Activated CD4-positive, alpha-beta T cell treated with anti-CD3 and anti-CD28 coated beads for 36 hours (primary cell): ENCODE measurements at regions of chr15 and their contacts with region 1.

Region 1: DNA sequence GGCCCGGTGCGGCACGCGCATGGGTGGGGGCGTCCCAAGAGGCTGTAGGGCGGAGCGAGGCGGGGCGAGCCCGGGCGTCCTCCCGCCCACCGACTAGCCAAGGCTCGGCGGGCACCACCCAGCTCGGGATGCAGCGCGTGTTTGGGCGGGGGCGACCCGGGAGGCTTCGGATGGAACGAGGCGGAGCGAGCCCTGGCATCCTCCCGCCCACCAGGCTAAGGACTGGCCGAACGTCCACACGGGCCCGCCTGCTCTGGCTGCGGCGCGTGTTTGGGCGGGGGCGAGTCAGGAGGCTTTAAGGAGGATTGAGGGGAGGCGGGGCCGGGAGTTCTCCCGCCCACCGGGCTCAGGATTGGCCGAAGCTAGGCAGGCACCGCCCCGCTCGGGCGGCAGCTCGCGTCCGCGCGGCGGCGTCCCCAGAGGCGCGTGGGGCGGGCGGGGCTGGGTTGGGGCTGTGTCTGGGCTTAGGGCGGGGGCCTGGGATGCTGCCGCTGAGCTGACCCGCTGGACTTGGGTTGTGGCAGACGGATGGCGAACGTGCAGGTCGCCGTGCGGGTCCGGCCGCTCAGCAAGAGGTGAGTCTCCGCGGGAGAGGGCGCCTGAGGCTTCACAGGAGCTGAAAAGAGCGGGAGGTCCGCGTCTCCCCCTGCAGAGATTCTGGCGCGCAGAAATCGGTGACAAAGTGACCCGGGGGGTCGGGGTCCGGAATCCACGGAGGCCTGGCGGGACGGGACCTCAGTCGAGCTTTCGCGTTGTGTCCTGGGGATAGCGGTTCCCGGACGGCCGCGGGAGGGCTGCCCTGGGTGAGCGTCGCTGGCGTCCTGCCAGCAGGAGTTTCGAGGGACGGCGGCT is at the start of gene STARD9:
- DNase-seq: peak; percentile 97
- ATAC-seq: peak; percentile 92
- H3K4me3 Mint-ChIP-seq: peak within 1 kb of the TSS; percentile 86
- H3K27ac Mint-ChIP-seq: peak within 1 kb of the TSS; percentile 76
- H3K4me1 Mint-ChIP-seq: peaks cover 18% of the 10 kb centered on the region
- H3K27me3 Mint-ChIP-seq: peaks cover 21% of the 10 kb centered on the region
- total RNA-seq, gene STARD9: 4.0 to 4.1 TPM

Region 2: GRCh38 chr15:41972253-41973242 is 602.9 kb before region 1 on chr15 and contains the start of gene EHD4:
- CTCF ChIA-PET with region 1: no interaction called
- POLR2A ChIA-PET with region 1: no interaction called
- intact Hi-C with region 1: loop called in 1 of 2 experiments (anchors 1 kb)
- DNase-seq: peak; percentile 98
- ATAC-seq: peak; percentile 80
- H3K4me3 Mint-ChIP-seq: peak within 1 kb of the TSS; percentile 86
- H3K27ac Mint-ChIP-seq: peak within 1 kb of the TSS; percentile 94
- H3K4me1 Mint-ChIP-seq: peaks cover 53% of the 10 kb centered on the region
- H3K27me3 Mint-ChIP-seq: peaks cover 8% of the 10 kb centered on the region
- total RNA-seq, gene EHD4: 34.7 to 35.7 TPM

Region 3: DNA sequence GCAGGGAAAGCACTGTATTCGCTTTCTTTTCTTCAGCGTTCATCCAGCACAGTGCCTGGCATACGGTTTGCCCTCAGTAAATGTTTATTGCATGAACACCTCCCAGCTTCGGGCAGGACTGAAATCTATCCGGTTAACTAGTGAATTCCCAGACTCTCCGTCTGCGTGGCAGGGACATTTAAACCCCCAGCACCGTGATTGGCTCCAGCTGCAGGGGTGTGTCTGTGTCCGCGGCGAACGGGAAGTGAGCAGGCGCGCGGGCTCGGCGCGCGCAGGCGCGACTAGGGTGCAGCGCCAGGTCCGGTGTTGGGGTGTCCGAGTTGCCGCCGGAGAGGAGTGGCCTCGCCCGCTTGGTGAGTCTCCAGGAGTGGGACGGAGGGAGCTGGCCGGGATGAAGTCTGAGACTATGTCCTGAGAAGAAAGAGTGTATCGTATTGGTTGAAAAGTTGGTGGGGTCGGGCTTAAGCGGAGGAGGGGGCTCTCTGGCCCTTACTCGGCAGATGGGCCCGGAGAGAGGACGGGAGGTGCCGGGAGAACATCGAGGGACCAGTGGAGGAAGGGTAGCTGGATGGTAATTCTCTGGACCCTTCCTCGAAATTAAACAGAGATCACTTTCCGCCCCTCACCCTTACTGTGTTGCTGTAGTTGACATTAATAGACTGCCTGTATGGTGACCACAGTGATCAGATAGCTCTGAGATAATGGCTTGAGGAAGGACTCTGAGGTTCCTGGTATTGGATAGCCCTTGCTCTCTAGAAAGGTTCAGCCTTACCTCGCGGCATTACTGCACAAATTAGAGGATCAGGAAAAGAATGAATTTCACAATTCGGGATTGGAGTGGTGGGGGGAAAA is 79.8 kb before region 1 on chr15 and contains the start of gene SNAP23:
- CTCF ChIA-PET with region 1: no interaction called
- POLR2A ChIA-PET with region 1: interaction called, 6 read pairs
- intact Hi-C with region 1: loop called in 1 of 2 experiments (anchors 1 kb)
- DNase-seq: peak; percentile 89
- ATAC-seq: peak; percentile 95
- H3K4me3 Mint-ChIP-seq: peak within 1 kb of the TSS; percentile 96
- H3K27ac Mint-ChIP-seq: peak within 1 kb of the TSS; percentile 97
- H3K4me1 Mint-ChIP-seq: peaks cover 68% of the 10 kb centered on the region
- H3K27me3 Mint-ChIP-seq: no peaks in the 10 kb centered on the region
- total RNA-seq, gene SNAP23: 45.5 to 77.5 TPM

Region 4: DNA sequence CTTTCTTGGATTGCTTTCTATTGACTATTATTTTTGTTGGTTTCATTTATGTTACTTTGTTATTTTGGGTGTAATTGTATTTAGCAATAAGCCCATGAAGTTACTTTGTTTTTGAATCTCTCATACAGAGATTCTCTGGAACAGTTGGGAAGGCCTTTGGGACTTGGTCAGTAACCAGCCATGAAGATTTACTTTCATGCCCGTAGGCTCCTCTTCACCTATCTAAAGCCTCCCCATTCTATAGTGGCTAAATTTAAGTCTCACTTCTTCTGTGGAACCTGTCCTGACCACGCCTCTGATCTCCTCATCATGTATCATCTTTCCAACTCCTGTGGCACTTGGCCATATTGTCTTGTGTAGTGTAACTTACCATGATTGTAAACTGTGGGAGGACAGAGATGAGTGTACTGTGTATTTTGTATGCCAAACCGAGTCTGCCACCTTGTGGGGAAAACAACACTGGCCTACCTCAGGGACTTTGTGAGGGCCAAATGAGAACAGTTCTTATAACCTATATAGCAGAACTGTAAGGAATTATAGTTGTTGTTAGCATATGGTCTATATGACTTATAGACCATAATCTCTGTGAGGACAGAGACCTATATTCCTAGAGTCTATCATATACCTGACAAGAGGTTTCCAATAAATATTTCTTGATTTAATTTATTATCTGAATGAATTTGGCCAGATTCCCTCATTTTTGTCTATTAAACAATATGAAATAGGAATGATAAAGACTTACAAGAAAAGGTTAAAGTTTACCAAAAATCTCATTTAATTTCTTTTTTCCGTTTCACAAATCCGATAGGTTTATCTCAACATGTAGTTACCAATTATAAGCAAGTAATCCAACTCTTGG is 75.0 kb after region 1 on chr15:
- CTCF ChIA-PET with region 1: no interaction called
- POLR2A ChIA-PET with region 1: no interaction called
- intact Hi-C with region 1: loop called in 1 of 2 experiments (anchors 2 kb)
- DNase-seq: peak; percentile 78
- ATAC-seq: peak; percentile 100
- H3K4me3 Mint-ChIP-seq: no peak overlapping the region
- H3K27ac Mint-ChIP-seq: no peak overlapping the region
- H3K4me1 Mint-ChIP-seq: peaks cover 2% of the 10 kb centered on the region
- H3K27me3 Mint-ChIP-seq: no peaks in the 10 kb centered on the region

Region 5: GRCh38 chr15:42736793-42737528 is 161.5 kb after region 1 on chr15 and contains the start of gene CDAN1:
- CTCF ChIA-PET with region 1: no interaction called
- POLR2A ChIA-PET with region 1: no interaction called
- intact Hi-C with region 1: loop called (anchors 1 to 5 kb)
- DNase-seq: peak; percentile 96
- ATAC-seq: peak; percentile 94
- H3K4me3 Mint-ChIP-seq: peak within 1 kb of the TSS; percentile 76
- H3K27ac Mint-ChIP-seq: peak within 1 kb of the TSS; percentile 61
- H3K4me1 Mint-ChIP-seq: peaks cover 16% of the 10 kb centered on the region
- H3K27me3 Mint-ChIP-seq: no peaks in the 10 kb centered on the region
- total RNA-seq, gene CDAN1: 12.9 to 16.6 TPM

Region 6: GRCh38 chr15:43105778-43106485 is 530.5 kb after region 1 on chr15 and contains the start of gene UBR1:
- CTCF ChIA-PET with region 1: no interaction called
- POLR2A ChIA-PET with region 1: no interaction called
- intact Hi-C with region 1: loop called in 1 of 2 experiments (anchors 10 kb)
- DNase-seq: peak; percentile 95
- ATAC-seq: peak; percentile 94
- H3K4me3 Mint-ChIP-seq: peak within 1 kb of the TSS; percentile 93
- H3K27ac Mint-ChIP-seq: peak within 1 kb of the TSS; percentile 96
- H3K4me1 Mint-ChIP-seq: peaks cover 41% of the 10 kb centered on the region
- H3K27me3 Mint-ChIP-seq: no peaks in the 10 kb centered on the region
- total RNA-seq, gene UBR1: 26.8 to 30.6 TPM